Activated CD4-positive, alpha-beta memory T cell treated with anti-CD3 and anti-CD28 coated beads, Interleukin-2, amount 10 ng/mL, durations not matched to agents 7 days and 5 days (primary cell): ENCODE measurements at regions of chr22 and their contacts with region 1.

Region 1: DNA sequence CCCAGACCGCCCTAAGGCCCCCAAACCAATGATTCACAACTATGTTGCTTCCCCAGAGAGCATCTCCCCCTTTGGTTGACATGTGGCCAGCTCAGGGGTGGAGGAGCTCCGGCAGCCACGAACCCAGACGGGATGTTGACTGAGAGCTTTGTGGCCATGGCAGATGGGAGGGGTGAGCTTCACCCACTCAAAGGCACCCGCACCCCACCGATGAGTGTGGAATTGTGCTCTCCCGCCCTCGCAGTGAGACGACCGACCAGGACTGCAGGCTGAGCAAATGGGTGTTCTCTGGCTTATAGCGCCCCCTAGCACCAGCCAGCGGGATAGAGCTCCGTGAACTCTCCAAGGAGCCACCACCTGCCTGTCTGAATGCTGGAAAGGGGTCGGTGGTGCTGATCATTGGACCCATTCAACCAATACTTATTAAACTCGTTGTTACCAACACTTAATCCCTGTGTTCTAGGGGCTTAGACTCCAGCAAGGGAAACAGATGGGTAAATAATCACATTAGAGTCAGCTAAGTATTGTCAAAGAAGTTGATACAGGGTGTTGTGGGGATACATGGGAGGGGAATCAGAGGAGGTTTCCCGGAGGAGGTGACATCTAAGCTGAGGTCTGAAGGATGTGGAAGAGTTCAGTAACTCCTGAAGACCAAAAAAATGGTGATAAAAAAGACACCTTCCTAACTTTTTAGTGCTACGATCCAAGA is 4.5 kb upstream of the TIMP3 start:
- DNase-seq: peak; percentile 62
- H3K4me3 Mint-ChIP-seq: no peak overlapping the region
- H3K27ac Mint-ChIP-seq: no peak overlapping the region
- H3K4me1 Mint-ChIP-seq: peaks cover 2% of the 10 kb centered on the region
- H3K27me3 Mint-ChIP-seq: peaks cover 27% of the 10 kb centered on the region

Region 2: DNA sequence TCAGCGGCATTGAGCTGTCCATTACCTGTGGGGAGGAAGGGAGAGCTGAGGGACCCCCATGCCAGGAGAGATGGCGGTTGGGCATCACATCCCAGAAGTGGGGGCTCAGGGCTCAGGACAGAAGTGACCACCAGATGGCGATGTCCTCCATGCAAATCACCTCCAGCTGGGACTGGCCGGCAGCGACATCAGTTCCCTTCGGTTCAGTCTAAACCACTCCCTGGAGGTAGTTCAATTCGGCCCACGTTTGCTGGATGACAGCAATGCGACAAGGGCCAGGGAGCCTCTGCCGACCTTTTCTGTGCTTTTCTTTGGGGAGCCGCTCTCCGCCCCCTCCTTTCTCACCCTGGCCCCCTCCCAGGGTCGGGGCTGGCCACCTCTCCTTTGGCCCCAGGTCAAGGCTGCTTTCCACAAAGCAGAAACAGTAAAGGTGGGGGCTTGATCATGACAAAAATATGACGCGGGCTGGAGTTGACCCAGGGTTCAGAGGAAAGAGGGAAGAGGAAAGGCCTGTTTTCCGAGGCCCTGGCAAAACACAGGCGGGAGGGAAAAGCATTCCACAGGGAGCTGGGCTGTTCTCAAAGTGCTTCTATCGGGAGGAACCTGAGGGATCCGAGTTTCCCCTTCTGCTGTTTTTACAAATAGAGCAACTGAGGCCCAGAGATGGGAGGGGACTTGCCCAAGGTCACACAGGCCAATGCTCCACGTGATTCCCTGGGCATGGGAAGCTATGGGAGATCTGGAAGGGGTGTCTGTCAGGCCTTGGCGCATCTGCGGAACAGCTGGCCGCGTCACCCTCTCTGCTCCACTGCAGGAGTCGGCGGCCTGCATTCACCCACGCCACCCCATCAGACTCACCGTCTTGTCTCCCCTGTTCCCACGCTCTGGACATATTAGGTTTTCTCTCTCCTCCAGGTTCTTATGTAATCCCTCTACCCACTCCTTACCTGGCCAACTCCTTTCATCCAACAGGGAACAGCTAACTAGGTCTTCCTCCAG is 267.7 kb before region 1 on chr22:
- CTCF ChIA-PET with region 1: interaction called, 40 read pairs
- POLR2A ChIA-PET with region 1: no interaction called
- DNase-seq: peak; percentile 65
- H3K4me3 Mint-ChIP-seq: no peak overlapping the region
- H3K27ac Mint-ChIP-seq: no peak overlapping the region
- H3K4me1 Mint-ChIP-seq: no peaks in the 10 kb centered on the region
- H3K27me3 Mint-ChIP-seq: peaks cover 2% of the 10 kb centered on the region

Region 3: DNA sequence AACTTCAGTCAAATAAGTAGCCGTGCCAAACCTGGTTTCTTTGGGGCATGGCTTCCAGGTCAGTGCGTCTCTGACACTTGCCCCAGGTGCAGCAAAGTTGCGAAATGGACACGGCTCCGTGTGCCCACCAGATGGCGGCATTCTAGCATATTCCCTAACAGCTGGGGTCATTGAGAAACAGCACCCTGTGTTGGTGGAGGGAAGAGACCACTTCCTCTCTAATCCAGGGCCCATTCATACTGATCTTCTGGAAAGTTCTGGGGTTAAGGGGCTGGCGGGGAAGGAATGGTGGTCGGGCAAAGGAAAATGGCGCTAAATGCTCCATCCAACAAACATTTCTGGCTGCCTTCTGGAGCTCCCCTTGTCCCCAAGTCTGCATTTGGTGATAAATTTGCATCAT is 136.7 kb before region 1 on chr22:
- CTCF ChIA-PET with region 1: interaction called, 134 read pairs
- POLR2A ChIA-PET with region 1: interaction called, 4 read pairs
- DNase-seq: peak; percentile 57
- H3K4me3 Mint-ChIP-seq: no peak overlapping the region
- H3K27ac Mint-ChIP-seq: no peak overlapping the region
- H3K4me1 Mint-ChIP-seq: no peaks in the 10 kb centered on the region
- H3K27me3 Mint-ChIP-seq: peaks cover 8% of the 10 kb centered on the region

Region 4: DNA sequence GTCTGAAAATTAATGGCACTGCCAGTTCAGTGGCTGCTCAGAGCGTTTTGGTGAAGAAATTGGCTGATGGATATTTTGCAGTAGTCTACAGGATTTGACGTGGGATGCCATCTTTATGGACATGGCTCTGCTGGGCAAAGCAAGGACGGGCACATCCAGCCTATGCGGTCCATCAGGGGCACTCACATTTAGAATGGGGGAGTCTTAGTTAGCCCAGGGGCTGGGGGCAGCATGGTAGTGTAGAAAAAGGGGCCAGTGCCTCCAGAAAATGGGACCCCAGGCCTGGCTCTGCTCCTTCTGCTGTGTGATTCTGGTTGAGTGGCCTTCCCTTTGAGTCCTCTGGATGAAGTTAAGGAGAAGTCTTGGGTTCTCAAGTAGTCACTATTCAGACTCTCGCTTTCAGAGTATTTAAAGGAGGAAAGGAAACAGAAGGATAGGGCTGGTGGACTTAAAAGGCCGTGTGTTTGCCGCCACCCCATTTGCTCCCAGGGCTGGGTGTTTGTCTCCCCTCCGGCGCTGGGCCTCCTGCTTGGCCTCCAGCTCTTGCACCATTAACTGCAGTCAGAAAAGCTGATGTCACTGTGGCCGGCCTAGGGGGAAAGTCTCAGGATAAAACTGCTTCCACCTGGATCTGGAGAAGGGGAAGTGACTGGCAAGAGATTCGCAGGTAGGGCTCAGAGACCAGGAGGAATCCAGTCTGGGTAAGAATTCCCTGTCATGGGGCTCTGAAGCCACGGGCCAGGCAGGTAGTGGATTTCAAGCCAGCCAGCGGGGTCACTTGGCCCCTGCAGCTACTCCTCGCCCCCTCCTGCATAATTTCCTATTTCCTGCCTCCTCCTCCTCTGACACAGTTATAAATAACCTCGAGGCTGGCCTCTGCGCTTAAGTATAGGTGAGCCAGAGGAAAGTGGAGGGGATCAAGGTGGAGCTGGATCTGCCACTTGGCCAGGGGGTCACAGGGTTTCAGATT is 21.4 kb after region 1 on chr22:
- CTCF ChIA-PET with region 1: no interaction called
- POLR2A ChIA-PET with region 1: no interaction called
- DNase-seq: no peak
- H3K4me3 Mint-ChIP-seq: no peak overlapping the region
- H3K27ac Mint-ChIP-seq: no peak overlapping the region
- H3K4me1 Mint-ChIP-seq: no peaks in the 10 kb centered on the region
- H3K27me3 Mint-ChIP-seq: no peaks in the 10 kb centered on the region